HCT116 (cell line): ENCODE measurements at regions of chr7 and their contacts with region 1.

Region 1: DNA sequence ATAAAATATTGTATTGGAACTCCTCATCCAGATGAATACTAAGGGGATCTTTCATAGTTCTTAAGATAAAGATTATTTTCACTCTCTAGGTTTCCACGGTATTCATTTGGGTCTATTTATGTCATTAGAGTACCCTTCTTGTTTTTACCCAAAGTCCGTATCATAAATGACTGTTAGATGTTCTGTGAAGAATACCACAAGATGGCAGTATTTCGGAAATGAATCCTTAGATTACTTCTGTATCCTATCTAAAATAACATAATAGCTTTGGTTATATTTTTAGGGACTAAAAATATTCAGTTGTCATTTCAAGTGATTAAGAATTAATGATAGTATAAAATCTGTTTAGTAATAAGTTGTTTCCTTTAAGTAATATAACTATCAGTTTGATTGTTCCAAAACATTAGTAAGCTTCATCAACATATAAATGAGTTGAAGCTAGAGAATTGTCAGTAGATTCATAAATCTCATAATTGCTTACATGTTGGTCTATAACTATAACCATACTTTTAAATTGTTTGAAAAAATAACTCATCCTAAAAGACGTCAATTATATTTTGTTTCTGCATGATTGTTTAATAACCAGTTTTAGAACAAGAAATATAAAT is 337.5 kb upstream of the KCND2 start:
- DNase-seq: peak; percentile 32
- ATAC-seq: peak; percentile 70
- H3K4me3 ChIP-seq: no peak overlapping the region
- H3K27ac ChIP-seq: no peak overlapping the region
- H3K4me1 ChIP-seq: no peaks in the 10 kb centered on the region
- H3K27me3 ChIP-seq: no peaks in the 10 kb centered on the region
- CTCF ChIP-seq: peak; percentile 26 to 58 (median 52); a peak in 5 of 6 replicates
- POLR2A ChIP-seq: no peak
- RAD21 ChIP-seq: peak; percentile 50

Region 2: GRCh38 chr7:119681336-119681735 is 254.2 kb before region 1 on chr7:
- CTCF ChIA-PET with region 1: no interaction called
- POLR2A ChIA-PET with region 1: no interaction called
- RAD21 ChIA-PET with region 1: no interaction called
- intact Hi-C with region 1: no loop called
- DNase-seq: no peak
- ATAC-seq: no peak
- H3K4me3 ChIP-seq: no peak overlapping the region
- H3K27ac ChIP-seq: no peak overlapping the region
- H3K4me1 ChIP-seq: no peaks in the 10 kb centered on the region
- H3K27me3 ChIP-seq: no peaks in the 10 kb centered on the region
- CTCF ChIP-seq: no peak
- POLR2A ChIP-seq: no peak
- RAD21 ChIP-seq: no peak

Region 3: GRCh38 chr7:119969054-119969453 is 33.5 kb after region 1 on chr7:
- CTCF ChIA-PET with region 1: no interaction called
- POLR2A ChIA-PET with region 1: no interaction called
- RAD21 ChIA-PET with region 1: no interaction called
- intact Hi-C with region 1: no loop called
- DNase-seq: no peak
- ATAC-seq: no peak
- H3K4me3 ChIP-seq: no peak overlapping the region
- H3K27ac ChIP-seq: no peak overlapping the region
- H3K4me1 ChIP-seq: no peaks in the 10 kb centered on the region
- H3K27me3 ChIP-seq: no peaks in the 10 kb centered on the region
- CTCF ChIP-seq: no peak
- POLR2A ChIP-seq: no peak
- RAD21 ChIP-seq: no peak

Region 4: GRCh38 chr7:120272261-120272660 is 336.7 kb after region 1 on chr7:
- CTCF ChIA-PET with region 1: interaction called, 11 read pairs
- POLR2A ChIA-PET with region 1: no interaction called
- RAD21 ChIA-PET with region 1: no interaction called
- intact Hi-C with region 1: loop called (anchors 1 kb)
- DNase-seq: peak; percentile 37
- ATAC-seq: peak; percentile 78
- H3K4me3 ChIP-seq: no peak overlapping the region
- H3K27ac ChIP-seq: no peak overlapping the region
- H3K4me1 ChIP-seq: no peaks in the 10 kb centered on the region
- H3K27me3 ChIP-seq: no peaks in the 10 kb centered on the region
- CTCF ChIP-seq: peak; percentile 59 to 73 (median 61); a peak in 5 of 6 replicates
- POLR2A ChIP-seq: no peak
- RAD21 ChIP-seq: peak; percentile 82

Region 5: DNA sequence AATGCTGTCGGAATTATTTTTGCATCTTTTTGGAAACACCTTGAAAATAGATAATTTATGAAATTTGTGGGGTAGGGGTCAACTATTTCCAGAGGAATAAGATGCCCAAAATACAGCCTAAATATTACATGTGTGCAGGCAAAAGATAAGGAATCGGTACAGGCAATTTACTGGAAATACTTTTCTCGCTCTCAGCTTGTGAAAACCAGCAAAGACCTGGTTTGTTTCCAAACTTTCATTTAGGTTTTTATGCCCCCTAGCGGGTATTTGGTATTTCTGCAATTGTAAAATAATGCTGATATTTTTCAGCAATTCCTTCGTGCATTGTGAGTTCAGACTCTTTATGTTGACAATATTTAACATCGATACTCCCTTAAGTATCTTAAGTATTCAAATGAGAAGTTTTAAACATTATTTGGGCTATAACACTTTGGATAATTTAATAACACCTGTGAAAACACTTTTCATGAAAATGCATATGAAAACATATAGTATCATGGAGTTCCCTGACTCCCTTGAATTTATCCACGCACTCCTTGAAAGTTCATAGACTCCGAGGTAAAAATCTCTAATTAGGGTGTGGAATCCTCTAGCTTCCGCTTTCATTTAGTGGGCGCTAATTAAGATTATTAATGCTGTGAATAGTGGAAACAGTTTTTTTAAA is 790.0 kb after region 1 on chr7:
- CTCF ChIA-PET with region 1: interaction called, 8 read pairs
- POLR2A ChIA-PET with region 1: no interaction called
- RAD21 ChIA-PET with region 1: no interaction called
- intact Hi-C with region 1: loop called (anchors 10 kb)
- DNase-seq: peak; percentile 43
- ATAC-seq: no peak; the same call in 1 of the 2 replicates
- H3K4me3 ChIP-seq: no peak overlapping the region
- H3K27ac ChIP-seq: no peak overlapping the region
- H3K4me1 ChIP-seq: peaks cover 0 to 3% of the 10 kb centered on the region in 2 experiments; a peak in 1 of 4 replicates
- H3K27me3 ChIP-seq: no peaks in the 10 kb centered on the region
- CTCF ChIP-seq: peak; percentile 51 to 71 (median 55); a peak in 5 of 6 replicates
- POLR2A ChIP-seq: no peak
- RAD21 ChIP-seq: peak; percentile 73